Gastrocnemius medialis (tissue), 4 donors: ENCODE measurements at regions of chr7 and their contacts with region 1.

Region 1: GRCh38 chr7:127578036-127578684 is 7.2 kb downstream of the GCC1 start:
- DNase-seq: no peak
- ATAC-seq: no peak
- H3K4me3 ChIP-seq: no peak overlapping the region
- H3K27ac ChIP-seq: no peak overlapping the region
- H3K4me1 ChIP-seq: peaks cover 25 to 30% of the 10 kb centered on the region in 2 donors
- H3K27me3 ChIP-seq: no peaks in the 10 kb centered on the region
- CTCF ChIP-seq: no peak
- POLR2A ChIP-seq: no peak

Region 2: GRCh38 chr7:127047521-127047920 is 530.6 kb before region 1 on chr7:
- in situ Hi-C with region 1: no loop called
- intact Hi-C with region 1: no loop called
- DNase-seq: no peak
- ATAC-seq: no peak
- H3K4me3 ChIP-seq: no peak overlapping the region
- H3K27ac ChIP-seq: no peak overlapping the region
- H3K4me1 ChIP-seq: no peaks in the 10 kb centered on the region
- H3K27me3 ChIP-seq: no peaks in the 10 kb centered on the region
- CTCF ChIP-seq: no peak
- POLR2A ChIP-seq: no peak

Region 3: GRCh38 chr7:127383123-127383835 is 194.9 kb before region 1 on chr7:
- in situ Hi-C with region 1: loop called in 2 of 4 experiments (anchors 10 to 25 kb)
- intact Hi-C with region 1: no loop called
- DNase-seq: no peak
- ATAC-seq: peak in 1 of 2 donors; percentile 81
- H3K4me3 ChIP-seq: no peak overlapping the region
- H3K27ac ChIP-seq: no peak overlapping the region
- H3K4me1 ChIP-seq: peaks cover 21 to 32% of the 10 kb centered on the region in 2 donors
- H3K27me3 ChIP-seq: no peaks in the 10 kb centered on the region
- CTCF ChIP-seq: no peak
- POLR2A ChIP-seq: no peak